H1 (cell line): ENCODE measurements at regions of chr12 and their contacts with region 1.

Region 1: DNA sequence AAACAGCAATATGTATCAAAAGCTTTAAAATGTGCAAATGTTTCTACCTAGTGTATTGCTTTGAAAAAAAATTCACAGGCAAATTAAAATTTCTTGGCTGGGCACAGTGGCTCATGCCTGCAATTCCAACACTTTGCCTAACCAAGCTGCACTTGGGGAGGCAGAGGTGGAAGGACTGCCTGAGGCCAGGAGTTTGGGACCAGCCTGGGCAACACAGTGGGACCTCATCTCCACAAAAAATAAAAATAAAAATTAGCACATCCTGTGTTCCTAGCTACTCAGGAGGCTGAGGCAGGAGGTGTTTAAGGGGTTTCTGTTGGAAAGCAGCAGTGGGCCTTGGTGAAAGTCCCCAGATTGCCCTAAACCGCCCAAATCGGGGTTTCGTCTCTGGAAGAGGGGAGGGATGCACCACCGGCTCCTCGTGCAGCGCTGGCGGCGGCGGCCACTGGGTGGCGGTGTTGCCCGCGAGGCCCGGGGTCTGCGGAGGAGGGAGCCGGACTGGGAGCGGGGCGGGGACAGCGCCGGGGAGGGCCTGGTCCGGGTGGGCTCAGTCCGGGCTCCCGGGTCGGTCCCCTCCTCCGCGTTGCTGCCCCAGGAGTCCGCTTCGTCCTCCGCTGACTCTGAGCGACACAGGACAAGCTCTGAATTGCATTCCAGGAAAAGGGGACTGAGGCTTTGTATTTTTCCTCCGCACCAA is 265.6 kb downstream of the AACS start:
- DNase-seq: peak in 1 of 2 experiments; percentile 98
- H3K4me3 ChIP-seq: peak overlapping the region; percentile 47 to 71 (median 68)
- H3K27ac ChIP-seq: no peak overlapping the region; the same call in 1 of the 2 replicates
- H3K4me1 ChIP-seq: peaks cover 8 to 16% (median 14%) of the 10 kb centered on the region in 4 experiments
- H3K27me3 ChIP-seq: no peaks in the 10 kb centered on the region
- CTCF ChIP-seq: peak; percentile 85 to 96 (median 93)
- EP300 ChIP-seq: no peak
- POLR2A ChIP-seq: no peak
- RAD21 ChIP-seq: peak; percentile 85 to 88

Region 2: GRCh38 chr12:125167658-125168057 is 163.1 kb before region 1 on chr12:
- CTCF ChIA-PET with region 1: no interaction called
- POLR2A ChIA-PET with region 1: no interaction called
- DNase-seq: no peak
- H3K4me3 ChIP-seq: no peak overlapping the region
- H3K27ac ChIP-seq: no peak overlapping the region
- H3K4me1 ChIP-seq: no peaks in the 10 kb centered on the region
- H3K27me3 ChIP-seq: no peaks in the 10 kb centered on the region
- CTCF ChIP-seq: no peak
- EP300 ChIP-seq: no peak
- POLR2A ChIP-seq: no peak
- RAD21 ChIP-seq: no peak

Region 3: GRCh38 chr12:125183187-125184067 is 147.4 kb before region 1 on chr12:
- CTCF ChIA-PET with region 1: interaction called, 24 read pairs
- POLR2A ChIA-PET with region 1: interaction called, 6 read pairs
- DNase-seq: peak in 1 of 2 experiments; percentile 98
- H3K4me3 ChIP-seq: peak overlapping the region in 3 of 4 experiments; percentile 29 to 43 (median 40); a peak in 5 of 8 replicates
- H3K27ac ChIP-seq: no peak overlapping the region
- H3K4me1 ChIP-seq: peaks cover 11 to 26% (median 14%) of the 10 kb centered on the region in 4 experiments
- H3K27me3 ChIP-seq: peaks cover 0 to 11% (median 5%) of the 10 kb centered on the region in 4 experiments; a peak in 4 of 7 replicates
- CTCF ChIP-seq: peak in 2 of 3 experiments; percentile 98 to 100; a peak in 3 of 4 replicates
- EP300 ChIP-seq: peak in 1 of 2 experiments; percentile 48; a peak in 1 of 3 replicates
- POLR2A ChIP-seq: no peak
- RAD21 ChIP-seq: peak; percentile 99 to 100

Region 4: GRCh38 chr12:125284949-125285685 is 45.7 kb before region 1 on chr12:
- CTCF ChIA-PET with region 1: interaction called, 20 read pairs
- POLR2A ChIA-PET with region 1: interaction called, 3 read pairs
- DNase-seq: no peak
- H3K4me3 ChIP-seq: no peak overlapping the region
- H3K27ac ChIP-seq: no peak overlapping the region
- H3K4me1 ChIP-seq: peaks cover 11 to 16% (median 14%) of the 10 kb centered on the region in 4 experiments
- H3K27me3 ChIP-seq: no peaks in the 10 kb centered on the region
- CTCF ChIP-seq: no peak
- EP300 ChIP-seq: no peak
- POLR2A ChIP-seq: no peak
- RAD21 ChIP-seq: no peak

Region 5: GRCh38 chr12:125371033-125371432 is 40.2 kb after region 1 on chr12:
- CTCF ChIA-PET with region 1: interaction called, 47 read pairs
- POLR2A ChIA-PET with region 1: no interaction called
- DNase-seq: no peak
- H3K4me3 ChIP-seq: no peak overlapping the region
- H3K27ac ChIP-seq: no peak overlapping the region
- H3K4me1 ChIP-seq: peaks cover 0 to 3% (median 2%) of the 10 kb centered on the region in 4 experiments; a peak in 2 of 7 replicates
- H3K27me3 ChIP-seq: no peaks in the 10 kb centered on the region
- CTCF ChIP-seq: no peak
- EP300 ChIP-seq: no peak
- POLR2A ChIP-seq: no peak
- RAD21 ChIP-seq: no peak

Region 6: DNA sequence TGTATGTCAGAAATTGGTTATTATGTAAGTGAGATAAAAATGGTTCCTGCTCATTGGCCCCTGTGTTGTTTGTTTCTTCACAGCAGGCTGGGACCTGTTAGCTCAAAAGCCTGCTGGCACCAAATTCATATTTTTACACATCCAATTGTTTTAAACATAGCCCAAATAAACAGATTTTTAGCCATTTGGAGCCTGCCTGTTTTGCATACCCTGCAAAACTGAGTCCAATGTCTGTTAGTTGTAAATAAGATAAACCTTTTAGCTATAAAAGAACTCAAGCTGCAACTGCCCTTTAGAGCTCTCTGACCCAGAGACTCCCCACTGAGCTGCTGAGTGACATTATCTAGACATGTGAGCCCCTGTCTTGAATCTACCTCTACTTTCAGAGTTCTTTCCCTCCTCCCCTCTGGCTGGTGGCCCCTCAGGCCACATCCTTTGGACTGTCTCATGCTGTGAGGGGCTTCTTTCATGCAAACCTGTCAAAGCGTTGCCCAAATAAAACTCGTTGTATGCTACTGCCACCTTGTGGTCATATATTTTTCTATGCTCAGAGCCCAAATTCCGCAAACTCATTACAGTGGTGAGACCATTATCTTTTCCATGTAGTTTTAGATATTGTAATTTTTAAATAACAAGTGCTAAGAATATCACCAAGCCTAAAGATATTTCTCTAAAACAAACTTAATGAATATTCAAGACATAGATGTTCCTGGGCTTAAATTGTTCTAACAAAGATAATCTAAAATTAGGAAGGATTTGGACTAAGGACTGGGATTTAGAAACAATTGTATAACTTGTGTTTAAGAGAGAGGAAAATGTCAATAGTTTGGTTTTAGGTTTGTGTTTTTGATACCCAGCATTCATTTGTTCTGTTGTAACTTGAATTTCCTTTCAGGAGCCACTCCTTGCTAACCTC is 72.3 kb after region 1 on chr12:
- CTCF ChIA-PET with region 1: interaction called, 85 read pairs
- POLR2A ChIA-PET with region 1: interaction called, 3 read pairs
- DNase-seq: peak; percentile 64 to 66
- H3K4me3 ChIP-seq: no peak overlapping the region
- H3K27ac ChIP-seq: no peak overlapping the region
- H3K4me1 ChIP-seq: peaks cover 0 to 7% (median 0%) of the 10 kb centered on the region in 4 experiments; a peak in 1 of 7 replicates
- H3K27me3 ChIP-seq: no peaks in the 10 kb centered on the region
- CTCF ChIP-seq: peak in 2 of 3 experiments; percentile 70 to 74; a peak in 3 of 4 replicates
- EP300 ChIP-seq: no peak
- POLR2A ChIP-seq: no peak
- RAD21 ChIP-seq: peak; percentile 91 to 95